ENCODE measurements at regions of chr2 and their contacts with region 1.

Region 1: GRCh38 chr2:88627056-88627855 is at the start of gene EIF2AK3:
- DNase-seq: peak; percentile 99
- H3K4me3 ChIP-seq: peak within 1 kb of the TSS; percentile 86 to 95 (median 88)
- H3K27ac ChIP-seq: peak within 1 kb of the TSS; percentile 97 to 99 (median 97)
- H3K4me1 ChIP-seq: peaks cover 0 to 35% (median 24%) of the 10 kb centered on the region in 4 donors
- H3K27me3 ChIP-seq: no peaks in the 10 kb centered on the region
- CTCF ChIP-seq: peak in 2 of 4 experiments; percentile 10 to 20
- EP300 ChIP-seq: no peak
- POLR2A ChIP-seq: peak; percentile 93 to 96
- total RNA-seq, gene EIF2AK3: 7.1 to 16.6 (median 10.4) TPM

Region 2: DNA sequence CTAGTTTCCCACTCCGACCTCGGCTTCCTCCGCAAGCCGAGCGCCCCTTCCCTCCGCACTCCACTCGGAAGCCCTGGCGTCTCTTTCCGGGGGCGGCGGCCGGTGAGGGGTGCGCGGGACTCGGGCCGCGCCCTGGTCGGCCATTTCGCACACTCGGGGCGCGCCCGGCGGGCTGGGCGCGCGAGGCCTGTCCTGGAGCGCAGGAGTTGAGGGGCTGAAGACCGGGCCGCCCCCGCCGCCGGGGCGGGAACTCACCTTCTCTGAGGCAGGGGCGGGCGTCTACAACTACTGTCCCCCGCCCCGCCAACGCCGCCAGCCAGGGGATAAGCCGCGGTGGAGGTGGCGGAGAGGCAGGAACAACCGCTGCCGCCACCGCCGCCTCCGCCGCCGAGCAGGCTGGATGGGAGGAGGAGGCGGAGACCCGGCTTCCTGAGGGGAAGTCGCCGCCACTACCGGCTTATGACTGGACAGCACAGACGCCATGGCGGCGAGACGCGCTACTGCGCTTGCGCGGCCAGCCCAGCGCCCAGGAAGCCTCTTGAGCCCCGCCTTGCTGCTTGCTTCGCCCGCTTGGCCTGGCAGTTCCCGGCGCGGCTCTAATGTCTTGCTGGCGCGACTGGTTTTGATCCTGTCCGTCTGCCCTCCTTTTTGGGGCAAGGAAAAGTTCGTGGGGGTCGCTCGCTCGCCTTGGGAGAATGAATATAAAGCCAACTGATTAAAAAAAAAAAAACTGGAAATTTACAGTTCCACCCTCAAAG is 571.7 kb before region 1 on chr2 and contains the start of gene KRCC1:
- intact Hi-C with region 1: loop called (anchors 5 kb)
- DNase-seq: peak; percentile 97
- H3K4me3 ChIP-seq: peak within 1 kb of the TSS; percentile 75 to 95 (median 86)
- H3K27ac ChIP-seq: peak within 1 kb of the TSS; percentile 96 to 99 (median 98)
- H3K4me1 ChIP-seq: peaks cover 0 to 41% (median 18%) of the 10 kb centered on the region in 4 donors
- H3K27me3 ChIP-seq: no peaks in the 10 kb centered on the region
- CTCF ChIP-seq: no peak
- EP300 ChIP-seq: no peak
- POLR2A ChIP-seq: peak; percentile 94
- total RNA-seq, gene KRCC1: 27.7 to 48.2 (median 38.4) TPM

Region 3: DNA sequence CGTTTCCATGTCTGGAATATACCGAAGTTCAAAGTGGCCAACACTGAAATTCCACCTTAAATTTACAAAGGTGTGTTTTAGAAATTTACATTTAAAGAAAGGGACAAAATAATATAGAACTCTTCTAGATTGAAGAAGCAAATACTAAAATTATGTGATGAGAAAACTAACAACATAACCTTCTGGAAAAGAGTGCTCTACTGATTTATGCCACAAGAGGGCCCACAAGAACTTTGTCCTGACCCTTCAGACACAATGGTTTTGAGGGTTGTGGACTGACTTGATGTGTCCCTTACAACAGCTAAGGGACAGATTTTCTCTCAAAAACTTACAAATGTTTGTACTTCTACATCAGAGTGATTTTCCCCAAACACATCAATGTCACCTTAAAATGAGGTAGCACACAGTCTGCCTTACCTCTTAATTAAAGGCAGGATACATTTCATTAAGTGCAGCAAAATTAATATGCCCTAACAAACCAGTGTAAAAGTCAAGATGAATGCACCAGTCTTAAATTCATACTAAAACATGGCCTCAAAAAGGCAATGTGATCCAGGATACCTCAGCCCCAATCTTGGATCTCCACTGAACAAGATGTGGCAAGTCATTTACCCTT is 36.1 kb before region 1 on chr2:
- intact Hi-C with region 1: loop called (anchors 5 kb)
- DNase-seq: no peak
- H3K4me3 ChIP-seq: no peak overlapping the region
- H3K27ac ChIP-seq: no peak overlapping the region
- H3K4me1 ChIP-seq: no peaks in the 10 kb centered on the region
- H3K27me3 ChIP-seq: no peaks in the 10 kb centered on the region
- CTCF ChIP-seq: peak; percentile 23 to 70 (median 60)
- EP300 ChIP-seq: no peak
- POLR2A ChIP-seq: no peak

Region 4: DNA sequence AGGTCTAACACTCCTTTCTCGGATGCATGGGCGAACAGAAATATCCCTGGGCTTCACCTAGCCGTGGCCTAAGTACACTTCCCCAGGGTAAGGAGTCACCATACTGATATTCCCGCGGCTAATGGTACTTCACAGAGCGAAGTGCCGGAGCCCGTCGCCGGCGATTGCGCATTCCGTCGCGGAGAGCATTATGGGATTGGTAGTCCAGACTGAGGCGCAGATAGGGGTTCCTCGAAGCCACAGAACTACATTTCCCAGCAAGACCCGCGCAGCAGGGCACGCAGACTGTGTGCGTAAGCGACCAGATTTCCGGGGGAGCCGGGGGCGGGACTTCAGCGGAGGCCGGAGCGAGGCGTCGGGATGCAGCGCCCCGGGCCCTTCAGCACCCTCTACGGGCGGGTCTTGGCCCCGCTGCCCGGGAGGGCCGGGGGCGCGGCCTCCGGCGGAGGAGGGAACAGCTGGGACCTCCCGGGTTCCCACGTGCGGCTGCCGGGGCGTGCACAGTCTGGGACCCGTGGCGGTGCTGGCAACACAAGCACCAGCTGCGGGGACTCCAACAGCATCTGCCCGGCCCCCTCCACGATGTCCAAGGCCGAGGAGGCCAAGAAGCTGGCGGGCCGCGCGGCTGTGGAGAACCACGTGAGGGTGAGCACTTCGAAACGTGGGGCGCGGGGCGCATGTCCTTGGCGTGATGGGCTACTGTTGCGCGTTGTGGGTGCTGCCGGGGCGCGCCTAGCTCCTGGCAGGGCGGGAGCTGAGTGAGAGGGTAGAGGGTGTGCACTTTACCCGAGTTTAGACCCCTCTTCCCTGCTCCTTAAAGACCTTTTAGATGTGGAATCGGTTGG is 64.3 kb after region 1 on chr2 and contains the start of gene RPIA:
- intact Hi-C with region 1: loop called (anchors 1 kb)
- DNase-seq: peak; percentile 99
- H3K4me3 ChIP-seq: peak within 1 kb of the TSS; percentile 65 to 80 (median 76)
- H3K27ac ChIP-seq: peak within 1 kb of the TSS; percentile 73 to 84 (median 80)
- H3K4me1 ChIP-seq: peaks cover 0 to 26% (median 24%) of the 10 kb centered on the region in 4 donors
- H3K27me3 ChIP-seq: no peaks in the 10 kb centered on the region
- CTCF ChIP-seq: peak in 3 of 4 experiments; percentile 13 to 50 (median 23)
- EP300 ChIP-seq: peak in 1 of 4 donors; percentile 66
- POLR2A ChIP-seq: peak; percentile 38 to 43
- total RNA-seq, gene RPIA: 1.1 to 8.2 (median 5.1) TPM